ENCODE measurements at regions of chr19 and their contacts with region 1.

Region 1: GRCh38 chr19:40305403-40305802 is 20.3 kb upstream of the AKT2 start:
- DNase-seq: peak; percentile 100
- ATAC-seq: peak; percentile 92
- H3K4me3 ChIP-seq: no peak overlapping the region
- H3K27ac ChIP-seq: no peak overlapping the region
- H3K4me1 ChIP-seq: no peaks in the 10 kb centered on the region
- H3K27me3 ChIP-seq: peaks cover 11% of the 10 kb centered on the region
- CTCF ChIP-seq: no peak

Region 2: DNA sequence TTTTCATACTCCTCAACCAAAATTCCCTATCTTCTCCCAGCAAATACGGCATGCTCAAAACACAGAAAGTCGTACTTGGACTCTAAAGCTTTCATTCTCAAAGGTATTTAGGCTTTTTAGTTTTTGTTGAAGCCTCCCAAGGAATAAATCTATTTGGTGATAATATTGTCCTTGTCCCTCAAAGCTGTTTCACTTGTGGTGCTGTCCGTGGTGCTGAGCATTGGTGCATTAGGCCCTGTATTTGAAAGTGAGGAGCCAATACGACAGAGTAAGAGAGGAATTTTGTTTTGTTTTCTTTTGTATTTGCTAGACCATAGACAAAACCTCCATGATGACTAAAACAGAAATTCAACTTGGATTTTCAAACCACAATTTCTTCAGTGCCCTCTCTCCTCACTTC is 706.3 kb before region 1 on chr19:
- CTCF ChIA-PET with region 1: interaction called, 3 read pairs
- POLR2A ChIA-PET with region 1: no interaction called
- in situ Hi-C with region 1: loop called (anchors 5 kb)
- intact Hi-C with region 1: no loop called
- DNase-seq: no peak
- ATAC-seq: no peak
- H3K4me3 ChIP-seq: no peak overlapping the region
- H3K27ac ChIP-seq: no peak overlapping the region
- H3K4me1 ChIP-seq: no peaks in the 10 kb centered on the region
- H3K27me3 ChIP-seq: peaks cover 88% of the 10 kb centered on the region
- CTCF ChIP-seq: 0 out of 2 replicates have a peak, but pooled peaks have one; percentile 1

Region 3: GRCh38 chr19:40139533-40140287 is 165.7 kb before region 1 on chr19:
- CTCF ChIA-PET with region 1: interaction called, 274 read pairs
- POLR2A ChIA-PET with region 1: interaction called, 8 read pairs
- in situ Hi-C with region 1: loop called (anchors 5 kb)
- intact Hi-C with region 1: loop called (anchors 1 kb)
- DNase-seq: peak; percentile 100
- ATAC-seq: peak; percentile 76
- H3K4me3 ChIP-seq: no peak overlapping the region
- H3K27ac ChIP-seq: no peak overlapping the region
- H3K4me1 ChIP-seq: no peaks in the 10 kb centered on the region
- H3K27me3 ChIP-seq: peaks cover 43% of the 10 kb centered on the region
- CTCF ChIP-seq: no peak

Region 4: GRCh38 chr19:40184273-40184672 is 121.1 kb before region 1 on chr19:
- CTCF ChIA-PET with region 1: interaction called, 19 read pairs
- POLR2A ChIA-PET with region 1: interaction called, 4 read pairs
- in situ Hi-C with region 1: no loop called
- intact Hi-C with region 1: no loop called
- DNase-seq: no peak
- ATAC-seq: no peak
- H3K4me3 ChIP-seq: no peak overlapping the region
- H3K27ac ChIP-seq: no peak overlapping the region
- H3K4me1 ChIP-seq: no peaks in the 10 kb centered on the region
- H3K27me3 ChIP-seq: peaks cover 17% of the 10 kb centered on the region
- CTCF ChIP-seq: no peak

Region 5: DNA sequence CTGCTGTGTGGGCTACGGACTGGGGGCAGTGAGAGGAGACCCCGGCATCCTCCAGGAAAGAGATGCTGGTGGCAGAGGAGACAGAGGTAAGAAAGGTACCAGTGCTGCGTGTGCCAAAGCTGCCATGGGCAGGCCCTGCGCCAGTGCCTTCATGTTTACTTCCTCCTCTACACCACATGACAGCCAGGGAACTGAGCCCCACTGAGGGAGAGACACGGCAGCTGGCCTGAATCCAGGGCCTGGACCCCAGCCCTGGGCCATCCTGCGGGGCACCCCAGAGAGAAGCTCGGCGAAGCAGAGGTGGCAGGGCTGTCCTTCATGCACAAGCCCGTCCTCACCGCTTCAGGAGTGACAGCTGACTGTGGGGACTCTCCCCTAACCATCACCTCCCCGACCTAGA is 56.2 kb before region 1 on chr19:
- CTCF ChIA-PET with region 1: interaction called, 17 read pairs
- POLR2A ChIA-PET with region 1: interaction called, 20 read pairs
- in situ Hi-C with region 1: no loop called
- intact Hi-C with region 1: no loop called
- DNase-seq: no peak
- ATAC-seq: peak; percentile 0; the same call in 1 of the 2 replicates
- H3K4me3 ChIP-seq: no peak overlapping the region
- H3K27ac ChIP-seq: no peak overlapping the region
- H3K4me1 ChIP-seq: 0 out of 2 replicates have a peak, but pooled peaks cover 5% of the 10 kb centered on the region
- H3K27me3 ChIP-seq: no peaks in the 10 kb centered on the region
- CTCF ChIP-seq: no peak

Region 6: DNA sequence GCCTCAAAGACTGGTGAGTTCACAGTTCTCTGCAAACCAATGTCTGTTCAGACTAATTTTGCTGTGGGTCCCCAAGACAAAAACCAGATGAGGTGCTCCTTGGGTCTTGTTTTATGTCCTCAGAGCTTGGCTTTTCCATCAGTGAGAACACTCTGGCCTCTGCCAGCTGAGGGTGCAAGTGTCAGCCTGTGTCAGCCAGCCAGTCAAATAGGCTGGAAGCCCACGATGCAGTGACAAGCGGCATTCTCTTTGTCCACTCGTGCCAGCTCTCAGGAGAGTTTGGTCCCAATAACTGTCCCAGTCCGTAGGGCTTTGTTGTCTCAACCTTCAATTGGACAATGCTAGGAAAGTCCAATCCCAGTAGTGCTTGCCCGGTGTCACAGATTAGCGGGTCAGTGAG is 10.8 kb before region 1 on chr19:
- CTCF ChIA-PET with region 1: interaction called, 116 read pairs
- POLR2A ChIA-PET with region 1: interaction called, 11 read pairs
- in situ Hi-C with region 1: no loop called
- intact Hi-C with region 1: no loop called
- DNase-seq: no peak
- ATAC-seq: peak; percentile 4
- H3K4me3 ChIP-seq: no peak overlapping the region
- H3K27ac ChIP-seq: no peak overlapping the region
- H3K4me1 ChIP-seq: no peaks in the 10 kb centered on the region
- H3K27me3 ChIP-seq: peaks cover 4% of the 10 kb centered on the region; the same call in 1 of the 2 replicates
- CTCF ChIP-seq: no peak

Region 7: GRCh38 chr19:40365613-40366401 is 60.4 kb after region 1 on chr19:
- CTCF ChIA-PET with region 1: no interaction called
- POLR2A ChIA-PET with region 1: no interaction called
- in situ Hi-C with region 1: no loop called
- intact Hi-C with region 1: no loop called
- DNase-seq: no peak
- ATAC-seq: no peak
- H3K4me3 ChIP-seq: peak overlapping the region in 1 of 2 experiments; percentile 17; a peak in 1 of 4 replicates
- H3K27ac ChIP-seq: no peak overlapping the region
- H3K4me1 ChIP-seq: peaks cover 4% of the 10 kb centered on the region; the same call in 1 of the 2 replicates
- H3K27me3 ChIP-seq: no peaks in the 10 kb centered on the region
- CTCF ChIP-seq: no peak

Region 8: DNA sequence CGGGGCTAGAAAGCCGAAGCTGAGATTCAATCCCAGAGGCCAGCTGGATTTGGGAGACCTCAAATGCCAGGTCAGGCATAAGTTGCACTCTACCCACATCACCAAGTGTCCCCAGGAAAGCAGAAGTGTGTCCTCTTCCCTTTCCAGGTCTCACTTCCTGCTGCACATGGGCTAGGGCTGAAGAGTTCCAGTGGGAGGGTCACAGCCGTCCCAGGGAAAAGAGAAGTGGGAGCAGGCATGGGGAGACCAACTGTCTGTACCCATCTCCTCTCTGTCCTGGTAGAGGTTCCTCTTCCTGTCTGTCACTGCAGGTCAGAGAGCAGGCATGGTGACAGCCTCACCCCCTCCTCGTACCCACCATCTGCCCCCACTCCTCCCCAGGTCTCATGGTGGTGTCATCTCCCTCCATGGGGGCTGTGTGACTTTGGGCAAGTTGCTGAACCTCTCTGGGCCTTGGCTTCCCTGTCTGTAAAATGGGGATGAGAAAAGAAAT is 928.4 kb after region 1 on chr19:
- CTCF ChIA-PET with region 1: no interaction called
- POLR2A ChIA-PET with region 1: no interaction called
- in situ Hi-C with region 1: no loop called
- intact Hi-C with region 1: no loop called
- DNase-seq: no peak
- ATAC-seq: no peak
- H3K4me3 ChIP-seq: no peak overlapping the region
- H3K27ac ChIP-seq: no peak overlapping the region
- H3K4me1 ChIP-seq: peaks cover 3% of the 10 kb centered on the region; the same call in 1 of the 2 replicates
- H3K27me3 ChIP-seq: no peaks in the 10 kb centered on the region
- CTCF ChIP-seq: no peak